Breast epithelium (tissue), 4 donors: ENCODE measurements at regions of chr3 and their contacts with region 1.

Region 1: GRCh38 chr3:85050821-85051220 is 92.0 kb downstream of the CADM2 start:
- DNase-seq: no peak
- H3K4me3 ChIP-seq: no peak overlapping the region
- H3K27ac ChIP-seq: no peak overlapping the region
- H3K4me1 ChIP-seq: no peaks in the 10 kb centered on the region
- H3K27me3 ChIP-seq: no peaks in the 10 kb centered on the region
- CTCF ChIP-seq: no peak
- POLR2A ChIP-seq: no peak

Region 2: DNA sequence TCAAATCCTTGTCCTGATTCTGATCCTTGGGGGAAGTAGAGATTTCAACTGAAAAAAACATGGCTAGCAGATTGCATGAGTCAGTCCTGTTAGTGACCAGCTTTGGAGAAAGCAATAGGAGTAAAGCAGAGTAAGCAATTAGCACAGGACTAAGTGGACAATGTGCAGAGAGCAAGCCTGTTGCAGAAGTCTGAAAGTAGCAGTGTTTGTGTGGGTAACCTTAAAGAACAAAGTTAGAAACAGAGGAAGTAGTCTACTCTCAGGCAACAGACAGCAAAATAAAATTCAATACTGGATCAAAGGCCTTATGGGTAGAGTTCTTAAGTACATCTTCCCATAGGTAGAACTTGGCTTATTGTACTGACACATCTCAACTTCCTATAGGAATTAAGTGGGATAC is 824.8 kb after region 1 on chr3:
- intact Hi-C with region 1: loop called (anchors 10 kb)
- DNase-seq: no peak
- H3K4me3 ChIP-seq: no peak overlapping the region
- H3K27ac ChIP-seq: no peak overlapping the region
- H3K4me1 ChIP-seq: no peaks in the 10 kb centered on the region
- H3K27me3 ChIP-seq: no peaks in the 10 kb centered on the region
- CTCF ChIP-seq: no peak
- POLR2A ChIP-seq: no peak

Region 3: GRCh38 chr3:86056962-86057361 is 1006.1 kb after region 1 on chr3:
- intact Hi-C with region 1: no loop called
- DNase-seq: no peak
- H3K4me3 ChIP-seq: no peak overlapping the region
- H3K27ac ChIP-seq: no peak overlapping the region
- H3K4me1 ChIP-seq: no peaks in the 10 kb centered on the region
- H3K27me3 ChIP-seq: no peaks in the 10 kb centered on the region
- CTCF ChIP-seq: no peak
- POLR2A ChIP-seq: no peak